CD8-positive, alpha-beta T cell (primary cell): ENCODE measurements at regions of chr15 and their contacts with region 1.

Region 1: DNA sequence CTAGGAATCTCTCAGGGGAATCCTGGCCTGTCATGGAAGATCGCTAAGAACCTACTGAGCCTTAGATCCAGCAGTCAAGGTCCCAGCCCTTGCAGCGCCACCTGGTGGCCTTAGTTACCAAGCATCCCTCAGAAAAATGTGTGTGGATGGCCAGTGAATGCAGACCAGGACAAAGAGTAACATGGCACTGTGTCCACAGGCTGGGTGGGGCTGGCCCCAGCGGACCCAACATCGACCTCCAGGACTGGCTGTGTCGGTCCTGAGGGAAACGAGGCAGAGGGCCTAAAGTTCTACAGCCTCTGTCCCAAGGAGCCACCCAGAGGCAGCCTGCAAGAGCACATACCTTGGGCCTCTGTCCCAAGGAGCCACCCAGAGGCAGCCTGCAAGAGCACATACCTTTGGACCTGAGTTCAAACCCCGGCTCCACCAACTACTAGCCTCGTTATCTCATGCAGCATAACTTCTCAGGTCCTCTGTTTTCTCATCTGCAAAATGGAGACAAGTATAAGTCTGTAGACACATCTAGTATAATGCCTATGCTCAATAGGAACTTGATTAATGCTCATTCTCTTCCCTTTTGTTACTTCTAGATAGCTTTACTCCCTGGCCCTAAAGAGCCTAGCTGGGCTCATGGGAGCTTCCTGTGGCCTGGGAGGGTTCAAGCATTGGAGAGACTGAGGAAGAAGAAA is 57.5 kb upstream of the HERC1 start:
- DNase-seq: peak; percentile 48 to 83 (median 75)
- ATAC-seq: no peak
- H3K4me3 ChIP-seq: peak overlapping the region in 1 of 2 experiments; percentile 8
- H3K4me3 Mint-ChIP-seq: peak overlapping the region; percentile 5
- H3K27ac ChIP-seq: peak overlapping the region; percentile 35 to 68
- H3K27ac Mint-ChIP-seq: peak overlapping the region; percentile 90
- H3K4me1 ChIP-seq: peaks cover 65% of the 10 kb centered on the region
- H3K4me1 Mint-ChIP-seq: peaks cover 69% of the 10 kb centered on the region
- H3K27me3 ChIP-seq: no peaks in the 10 kb centered on the region
- H3K27me3 Mint-ChIP-seq: no peaks in the 10 kb centered on the region
- CTCF ChIP-seq: peak; percentile 71

Region 2: GRCh38 chr15:63752075-63752684 is 139.0 kb before region 1 on chr15:
- CTCF ChIA-PET with region 1: interaction called, 20 read pairs
- POLR2A ChIA-PET with region 1: no interaction called
- intact Hi-C with region 1: loop called (anchors 1 kb)
- DNase-seq: peak in 7 of 9 experiments; percentile 18 to 75 (median 28)
- ATAC-seq: peak; percentile 86
- H3K4me3 ChIP-seq: no peak overlapping the region
- H3K4me3 Mint-ChIP-seq: no peak overlapping the region
- H3K27ac ChIP-seq: no peak overlapping the region
- H3K27ac Mint-ChIP-seq: peak overlapping the region; percentile 78
- H3K4me1 ChIP-seq: no peaks in the 10 kb centered on the region
- H3K4me1 Mint-ChIP-seq: peaks cover 6% of the 10 kb centered on the region
- H3K27me3 ChIP-seq: no peaks in the 10 kb centered on the region
- H3K27me3 Mint-ChIP-seq: no peaks in the 10 kb centered on the region
- CTCF ChIP-seq: peak; percentile 85

Region 3: DNA sequence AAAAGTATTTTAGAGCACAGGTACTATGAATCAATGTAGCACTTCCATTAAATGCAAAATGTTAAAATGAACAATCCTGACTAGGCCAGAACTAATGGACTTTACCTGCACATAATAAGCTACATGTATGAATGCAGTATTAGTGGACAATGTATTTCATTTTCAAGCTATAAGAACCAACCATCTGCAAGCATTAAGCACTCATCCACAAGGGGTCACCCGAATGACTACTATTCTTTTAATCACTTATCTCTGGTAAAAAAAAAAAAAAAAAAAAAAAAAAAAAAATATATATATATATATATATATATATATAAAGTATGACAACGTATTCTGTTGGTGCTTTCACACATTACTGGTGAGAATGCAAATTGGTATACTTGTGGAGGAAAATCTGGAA is 64.7 kb before region 1 on chr15:
- CTCF ChIA-PET with region 1: interaction called, 7 read pairs
- POLR2A ChIA-PET with region 1: no interaction called
- intact Hi-C with region 1: loop called in 1 of 2 experiments (anchors 2 kb)
- DNase-seq: peak in 3 of 9 experiments; percentile 19 to 74 (median 64)
- ATAC-seq: no peak
- H3K4me3 ChIP-seq: no peak overlapping the region
- H3K4me3 Mint-ChIP-seq: peak overlapping the region; percentile 11
- H3K27ac ChIP-seq: no peak overlapping the region
- H3K27ac Mint-ChIP-seq: no peak overlapping the region
- H3K4me1 ChIP-seq: peaks cover 48% of the 10 kb centered on the region
- H3K4me1 Mint-ChIP-seq: peaks cover 79% of the 10 kb centered on the region
- H3K27me3 ChIP-seq: no peaks in the 10 kb centered on the region
- H3K27me3 Mint-ChIP-seq: no peaks in the 10 kb centered on the region
- CTCF ChIP-seq: no peak

Region 4: DNA sequence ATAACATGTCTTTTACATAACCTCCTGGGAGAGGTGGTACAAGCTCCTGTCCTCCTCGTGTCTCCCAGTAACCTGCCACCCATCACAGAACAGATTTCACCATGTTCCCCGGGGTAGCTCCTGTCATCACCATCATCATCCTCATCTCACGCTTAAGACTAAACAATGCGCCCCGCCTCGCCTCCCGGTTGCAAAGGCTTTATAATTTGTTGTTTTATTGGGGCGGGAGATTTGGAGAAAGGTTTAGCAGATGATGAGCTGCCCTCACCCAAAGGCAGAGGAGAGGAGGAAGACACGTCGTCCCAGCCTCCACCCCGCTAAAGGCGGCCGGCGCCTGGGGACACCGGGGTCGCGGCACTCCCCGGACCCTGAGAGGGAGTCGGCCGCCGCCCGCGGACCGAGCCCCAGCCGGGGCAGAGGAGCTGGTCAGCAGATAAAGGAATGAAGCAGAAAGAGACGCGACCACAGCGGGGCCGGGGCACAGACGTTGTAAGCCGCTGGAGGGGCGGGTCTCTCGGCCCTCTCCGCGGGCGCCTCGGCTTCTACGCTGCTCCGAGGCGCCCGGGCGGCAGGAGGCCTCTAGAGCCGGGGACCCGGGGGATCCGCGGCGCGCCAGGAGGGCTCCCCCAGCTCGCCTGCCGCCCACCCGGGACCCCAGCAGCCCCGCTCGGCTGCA is 58.1 kb before region 1 on chr15:
- CTCF ChIA-PET with region 1: interaction called, 7 read pairs
- POLR2A ChIA-PET with region 1: interaction called, 4 read pairs
- intact Hi-C with region 1: loop called in 1 of 2 experiments (anchors 2 kb)
- DNase-seq: peak in 7 of 9 experiments; percentile 10 to 59 (median 28)
- ATAC-seq: peak; percentile 34
- H3K4me3 ChIP-seq: peak overlapping the region; percentile 93 to 99
- H3K4me3 Mint-ChIP-seq: peak overlapping the region; percentile 98
- H3K27ac ChIP-seq: peak overlapping the region; percentile 92 to 98
- H3K27ac Mint-ChIP-seq: peak overlapping the region; percentile 94
- H3K4me1 ChIP-seq: peaks cover 40% of the 10 kb centered on the region
- H3K4me1 Mint-ChIP-seq: peaks cover 56% of the 10 kb centered on the region
- H3K27me3 ChIP-seq: no peaks in the 10 kb centered on the region
- H3K27me3 Mint-ChIP-seq: no peaks in the 10 kb centered on the region
- CTCF ChIP-seq: no peak

Region 5: GRCh38 chr15:63860155-63860554 is 31.1 kb before region 1 on chr15:
- CTCF ChIA-PET with region 1: interaction called, 12 read pairs
- POLR2A ChIA-PET with region 1: interaction called, 6 read pairs
- intact Hi-C with region 1: loop called in 1 of 2 experiments (anchors 2 kb)
- DNase-seq: peak; percentile 36 to 81 (median 60)
- ATAC-seq: peak; percentile 96
- H3K4me3 ChIP-seq: no peak overlapping the region
- H3K4me3 Mint-ChIP-seq: peak overlapping the region; percentile 54
- H3K27ac ChIP-seq: peak overlapping the region; percentile 39 to 62
- H3K27ac Mint-ChIP-seq: peak overlapping the region; percentile 94
- H3K4me1 ChIP-seq: peaks cover 34% of the 10 kb centered on the region
- H3K4me1 Mint-ChIP-seq: peaks cover 50% of the 10 kb centered on the region
- H3K27me3 ChIP-seq: no peaks in the 10 kb centered on the region
- H3K27me3 Mint-ChIP-seq: no peaks in the 10 kb centered on the region
- CTCF ChIP-seq: no peak